Spleen (tissue), 13 donors: ENCODE measurements at regions of chr7 and their contacts with region 1.

Region 1: DNA sequence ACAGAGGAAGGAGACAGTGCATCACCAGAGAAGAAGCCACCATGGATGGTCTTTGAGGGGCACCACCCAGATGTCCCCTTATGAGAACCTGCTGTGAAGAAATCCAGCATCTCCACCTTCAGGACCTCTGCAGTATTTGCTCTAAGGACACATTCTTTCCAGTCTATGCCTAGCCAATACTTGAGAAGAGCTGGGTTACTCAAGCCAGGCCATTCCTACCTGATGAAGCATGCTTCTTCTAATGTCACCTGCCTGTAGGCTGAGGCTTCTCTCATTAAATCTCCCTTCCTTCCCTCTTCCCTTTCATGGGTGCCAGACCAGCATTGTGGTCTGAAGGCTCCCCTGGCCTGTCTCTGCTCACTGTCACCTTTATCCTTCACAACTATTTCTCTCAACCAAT is 654.5 kb upstream of the AUTS2 start:
- DNase-seq: no peak
- H3K4me3 ChIP-seq: no peak overlapping the region
- H3K27ac ChIP-seq: no peak overlapping the region
- H3K4me1 ChIP-seq: no peaks in the 10 kb centered on the region
- H3K27me3 ChIP-seq: no peaks in the 10 kb centered on the region
- CTCF ChIP-seq: no peak
- POLR2A ChIP-seq: no peak

Region 2: DNA sequence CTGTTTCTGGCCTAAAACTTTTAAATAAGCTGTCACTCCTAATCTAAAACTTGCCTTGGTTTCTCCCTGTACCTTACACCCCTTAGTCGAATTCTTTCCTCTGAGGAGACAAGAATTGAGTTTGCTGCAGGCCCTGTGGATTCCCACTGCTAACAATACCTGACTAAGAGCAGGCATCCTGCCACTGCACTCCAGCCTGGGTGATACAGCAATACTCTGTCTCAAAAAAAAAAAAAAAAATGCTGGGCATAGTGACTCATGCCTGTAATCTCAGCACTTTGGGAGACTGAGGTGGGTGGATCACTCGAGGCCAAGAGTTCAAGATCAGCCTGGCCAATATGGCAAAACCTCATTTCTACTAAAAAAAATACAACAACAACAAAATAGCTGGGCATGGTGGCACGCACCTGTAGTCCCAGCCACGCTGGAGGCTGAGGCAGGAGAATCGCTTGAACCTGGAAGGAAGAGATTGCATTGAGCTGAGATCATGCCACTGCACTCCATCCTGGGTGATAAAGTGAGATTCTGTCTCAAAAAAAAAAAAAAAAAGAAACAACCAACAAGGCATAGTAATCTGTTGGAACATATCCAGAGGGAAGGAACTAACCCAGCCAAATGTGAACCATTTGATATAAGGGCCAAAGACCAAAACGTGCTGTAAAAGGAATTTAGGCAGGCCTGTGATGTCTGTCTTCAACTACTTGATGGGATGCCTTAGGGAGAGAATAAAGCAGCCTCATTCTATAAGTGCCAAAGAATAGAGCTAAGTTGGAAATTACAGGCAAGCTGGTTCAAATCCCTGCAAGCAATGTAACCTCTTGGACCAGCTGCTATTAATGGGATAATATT is 78.2 kb before region 1 on chr7:
- intact Hi-C with region 1: no loop called
- DNase-seq: no peak
- H3K4me3 ChIP-seq: no peak overlapping the region
- H3K27ac ChIP-seq: no peak overlapping the region
- H3K4me1 ChIP-seq: no peaks in the 10 kb centered on the region
- H3K27me3 ChIP-seq: no peaks in the 10 kb centered on the region
- CTCF ChIP-seq: no peak
- POLR2A ChIP-seq: no peak

Region 3: GRCh38 chr7:69002416-69002815 is 58.6 kb after region 1 on chr7:
- intact Hi-C with region 1: loop called (anchors 10 kb)
- DNase-seq: no peak
- H3K4me3 ChIP-seq: no peak overlapping the region
- H3K27ac ChIP-seq: no peak overlapping the region
- H3K4me1 ChIP-seq: no peaks in the 10 kb centered on the region
- H3K27me3 ChIP-seq: no peaks in the 10 kb centered on the region
- CTCF ChIP-seq: no peak
- POLR2A ChIP-seq: no peak